Activated CD4-positive, alpha-beta memory T cell treated with anti-CD3 and anti-CD28 coated beads, Interleukin-2, amount 10 ng/mL, durations not matched to agents 7 days and 5 days (primary cell): ENCODE measurements at regions of chr10 and their contacts with region 1.

Region 1: GRCh38 chr10:104274762-104275721 is 6.1 kb downstream of the GSTO2 start:
- DNase-seq: peak; percentile 53
- H3K4me3 Mint-ChIP-seq: peak overlapping the region; percentile 21
- H3K27ac Mint-ChIP-seq: no peak overlapping the region
- H3K4me1 Mint-ChIP-seq: peaks cover 6% of the 10 kb centered on the region
- H3K27me3 Mint-ChIP-seq: peaks cover 10% of the 10 kb centered on the region

Region 2: GRCh38 chr10:104246976-104247375 is 28.1 kb before region 1 on chr10:
- CTCF ChIA-PET with region 1: interaction called, 13 read pairs
- POLR2A ChIA-PET with region 1: interaction called, 8 read pairs
- DNase-seq: peak; percentile 32
- H3K4me3 Mint-ChIP-seq: peak overlapping the region; percentile 25
- H3K27ac Mint-ChIP-seq: peak overlapping the region; percentile 82
- H3K4me1 Mint-ChIP-seq: peaks cover 26% of the 10 kb centered on the region
- H3K27me3 Mint-ChIP-seq: peaks cover 29% of the 10 kb centered on the region

Region 3: DNA sequence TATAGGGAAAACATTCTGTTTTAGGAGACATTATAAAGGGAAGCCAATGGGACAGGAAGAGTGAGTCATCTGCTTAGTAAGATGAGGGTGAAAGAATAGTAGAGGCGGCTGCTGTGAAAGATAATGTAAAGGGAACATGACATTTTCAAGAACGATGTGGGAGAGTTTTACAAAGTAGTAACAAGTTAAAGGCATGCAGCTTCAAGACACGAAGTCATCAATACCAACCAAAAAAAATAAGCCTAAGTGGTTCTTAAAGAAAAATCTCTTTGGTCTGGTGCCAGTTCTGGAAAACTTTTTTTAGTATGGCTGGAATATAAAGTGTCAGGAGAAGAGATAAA is 14.3 kb before region 1 on chr10:
- CTCF ChIA-PET with region 1: interaction called, 61 read pairs
- POLR2A ChIA-PET with region 1: interaction called, 62 read pairs
- DNase-seq: no peak
- H3K4me3 Mint-ChIP-seq: peak overlapping the region; percentile 1
- H3K27ac Mint-ChIP-seq: peak overlapping the region; percentile 74
- H3K4me1 Mint-ChIP-seq: peaks cover 76% of the 10 kb centered on the region
- H3K27me3 Mint-ChIP-seq: no peaks in the 10 kb centered on the region

Region 4: DNA sequence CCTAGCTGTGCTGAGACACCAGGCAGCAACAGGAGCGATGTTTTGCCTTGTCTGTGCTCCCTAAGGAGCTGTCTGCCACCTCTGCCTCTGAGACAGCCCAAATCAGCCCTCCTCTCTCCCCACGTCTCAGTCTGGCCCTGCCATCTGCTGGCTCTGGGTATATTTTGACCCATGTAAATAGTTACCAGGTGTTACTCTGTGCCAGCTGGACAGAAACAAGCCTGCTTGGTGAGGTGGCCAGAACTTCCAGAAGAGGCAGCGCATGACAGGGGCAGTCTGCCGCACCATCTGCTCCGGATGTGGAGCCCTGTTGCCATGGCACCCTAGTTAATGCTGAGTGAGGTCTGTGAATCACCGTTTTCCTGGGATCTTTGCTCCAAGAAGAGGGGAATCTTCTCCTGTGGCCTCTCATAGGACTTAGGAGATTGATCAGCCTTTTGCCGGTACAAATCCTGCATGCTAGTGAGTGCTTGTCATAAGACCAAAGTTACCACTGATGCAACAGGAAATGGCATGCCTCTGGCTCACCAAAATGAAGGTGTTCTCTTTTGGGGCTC is 25.8 kb after region 1 on chr10:
- CTCF ChIA-PET with region 1: interaction called, 20 read pairs
- POLR2A ChIA-PET with region 1: interaction called, 6 read pairs
- DNase-seq: peak; percentile 41
- H3K4me3 Mint-ChIP-seq: no peak overlapping the region
- H3K27ac Mint-ChIP-seq: peak overlapping the region; percentile 42
- H3K4me1 Mint-ChIP-seq: peaks cover 42% of the 10 kb centered on the region
- H3K27me3 Mint-ChIP-seq: peaks cover 8% of the 10 kb centered on the region

Region 5: DNA sequence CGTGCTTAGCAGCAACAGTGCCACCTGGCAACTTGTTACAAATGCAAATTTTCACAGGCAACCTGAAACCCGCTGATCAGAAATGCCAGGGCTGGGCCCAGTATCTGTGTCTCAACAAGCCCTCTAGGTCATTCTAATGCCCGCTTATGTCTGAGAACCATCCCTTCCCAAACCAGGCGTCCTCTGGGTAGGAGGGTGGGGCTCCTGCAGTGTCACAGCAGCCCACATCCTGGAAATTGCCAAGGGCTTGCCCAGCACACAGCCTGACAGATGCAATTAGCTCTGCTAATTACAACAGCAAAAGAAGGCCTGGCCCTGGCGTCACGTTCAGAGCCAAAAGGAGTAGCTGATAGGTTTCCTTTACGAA is 47.4 kb after region 1 on chr10:
- CTCF ChIA-PET with region 1: interaction called, 11 read pairs
- POLR2A ChIA-PET with region 1: interaction called, 3 read pairs
- DNase-seq: peak; percentile 76
- H3K4me3 Mint-ChIP-seq: peak overlapping the region; percentile 67
- H3K27ac Mint-ChIP-seq: peak overlapping the region; percentile 89
- H3K4me1 Mint-ChIP-seq: peaks cover 87% of the 10 kb centered on the region
- H3K27me3 Mint-ChIP-seq: no peaks in the 10 kb centered on the region

Region 6: GRCh38 chr10:104345941-104346340 is 70.9 kb after region 1 on chr10:
- CTCF ChIA-PET with region 1: interaction called, 149 read pairs
- POLR2A ChIA-PET with region 1: interaction called, 5 read pairs
- DNase-seq: peak; percentile 37
- H3K4me3 Mint-ChIP-seq: no peak overlapping the region
- H3K27ac Mint-ChIP-seq: peak overlapping the region; percentile 62
- H3K4me1 Mint-ChIP-seq: peaks cover 16% of the 10 kb centered on the region
- H3K27me3 Mint-ChIP-seq: no peaks in the 10 kb centered on the region

Region 7: GRCh38 chr10:104456802-104457542 is 181.9 kb after region 1 on chr10:
- CTCF ChIA-PET with region 1: no interaction called
- POLR2A ChIA-PET with region 1: no interaction called
- DNase-seq: no peak
- H3K4me3 Mint-ChIP-seq: no peak overlapping the region
- H3K27ac Mint-ChIP-seq: no peak overlapping the region
- H3K4me1 Mint-ChIP-seq: no peaks in the 10 kb centered on the region
- H3K27me3 Mint-ChIP-seq: peaks cover 22% of the 10 kb centered on the region